Activated CD4-positive, alpha-beta T cell treated with anti-CD3 and anti-CD28 coated beads, Interleukin-2, amount 10 ng/mL, durations not matched to agents 24 days and 14 days (primary cell): ENCODE measurements at regions of chr2 and their contacts with region 1.

Region 1: DNA sequence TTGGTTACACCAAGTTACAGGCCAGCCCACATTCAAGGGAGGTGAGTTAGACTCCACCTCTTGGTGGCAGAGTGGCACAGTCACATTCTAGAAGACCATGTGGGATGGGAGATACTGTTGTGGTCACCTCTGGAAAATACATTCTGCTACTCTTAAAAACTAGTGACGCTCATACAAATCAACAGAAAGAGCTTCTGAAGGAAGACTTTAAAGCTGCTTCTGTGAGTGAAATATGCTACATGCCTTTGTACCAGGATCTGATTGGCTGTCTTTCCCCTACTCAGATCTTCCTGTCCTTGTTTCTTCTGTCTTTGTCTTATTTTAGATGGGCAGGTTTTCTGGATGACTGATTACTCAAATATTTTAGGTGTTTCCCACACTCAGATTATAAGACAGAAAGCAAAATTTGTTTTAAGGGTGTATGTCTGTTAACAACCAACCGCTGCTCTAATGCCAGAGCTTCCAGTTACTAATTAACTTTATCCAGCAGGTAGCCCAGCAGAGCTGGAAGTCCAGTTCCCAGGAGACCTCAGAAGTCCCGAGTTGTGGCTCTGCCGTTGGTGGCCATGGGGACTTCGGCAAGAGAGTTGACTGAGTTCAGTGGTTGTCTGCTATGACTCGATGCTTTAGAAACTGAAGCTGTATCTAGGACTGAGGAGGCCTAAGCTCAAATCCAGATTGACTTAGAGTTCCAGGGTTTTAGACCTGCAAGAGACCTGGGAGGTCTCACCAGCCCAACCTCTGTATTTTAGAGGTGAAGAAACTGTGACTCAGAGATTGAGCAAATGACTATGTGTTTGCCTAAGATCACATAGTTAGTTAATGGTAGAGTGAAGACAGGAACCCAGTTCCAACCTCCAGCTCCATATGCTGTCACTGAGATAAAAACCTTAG is 7.4 kb downstream of the IL1R2 start:
- DNase-seq: no peak
- H3K4me3 Mint-ChIP-seq: no peak overlapping the region
- H3K27ac Mint-ChIP-seq: peak overlapping the region; percentile 79
- H3K4me1 Mint-ChIP-seq: peaks cover 25% of the 10 kb centered on the region
- H3K27me3 Mint-ChIP-seq: peaks cover 3% of the 10 kb centered on the region

Region 2: DNA sequence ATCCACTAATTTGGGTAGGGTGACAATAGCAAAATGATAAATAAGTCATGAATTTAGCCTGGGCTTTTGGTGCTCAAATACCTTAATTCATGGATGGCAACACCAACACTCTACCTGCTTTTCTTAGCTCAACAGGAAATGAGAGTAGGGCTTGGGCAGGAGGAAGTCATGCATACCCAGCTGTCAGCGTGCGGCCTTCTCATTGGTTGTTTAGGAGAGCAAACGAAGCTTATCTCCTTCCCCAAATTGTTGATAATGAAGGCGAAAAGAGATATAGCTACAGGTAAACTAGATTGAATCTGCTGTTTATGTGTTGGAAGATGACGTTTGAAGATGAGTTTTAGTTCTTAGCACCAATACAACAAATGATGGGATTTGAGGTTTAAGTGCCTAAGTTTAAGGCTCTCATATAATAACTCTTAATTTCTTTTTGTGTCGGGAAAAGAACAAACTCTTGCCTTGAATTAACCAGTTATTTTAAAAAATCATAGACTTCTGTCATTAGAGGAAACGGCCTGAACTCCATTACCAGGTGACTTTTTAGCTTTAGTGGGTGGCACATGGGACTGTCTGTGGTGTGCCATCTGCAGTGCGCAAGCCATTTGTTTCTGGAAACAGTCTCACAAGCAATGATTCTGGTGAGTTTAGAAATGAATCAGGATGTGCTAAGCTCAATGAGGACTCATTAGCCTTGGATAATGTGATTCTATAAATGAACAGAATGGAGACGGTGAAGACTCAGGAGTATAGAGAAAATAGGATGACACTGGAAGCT is 281.9 kb before region 1 on chr2:
- intact Hi-C with region 1: loop called (anchors 5 kb)
- DNase-seq: peak; percentile 81
- H3K4me3 Mint-ChIP-seq: peak overlapping the region; percentile 31
- H3K27ac Mint-ChIP-seq: peak overlapping the region; percentile 90
- H3K4me1 Mint-ChIP-seq: peaks cover 58% of the 10 kb centered on the region
- H3K27me3 Mint-ChIP-seq: no peaks in the 10 kb centered on the region

Region 3: GRCh38 chr2:101860157-101860556 is 139.0 kb before region 1 on chr2:
- intact Hi-C with region 1: no loop called
- DNase-seq: no peak
- H3K4me3 Mint-ChIP-seq: no peak overlapping the region
- H3K27ac Mint-ChIP-seq: no peak overlapping the region
- H3K4me1 Mint-ChIP-seq: peaks cover 20% of the 10 kb centered on the region
- H3K27me3 Mint-ChIP-seq: no peaks in the 10 kb centered on the region

Region 4: GRCh38 chr2:101883863-101884262 is 115.3 kb before region 1 on chr2:
- intact Hi-C with region 1: loop called (anchors 5 kb)
- DNase-seq: peak; percentile 72
- H3K4me3 Mint-ChIP-seq: no peak overlapping the region
- H3K27ac Mint-ChIP-seq: no peak overlapping the region
- H3K4me1 Mint-ChIP-seq: peaks cover 7% of the 10 kb centered on the region
- H3K27me3 Mint-ChIP-seq: no peaks in the 10 kb centered on the region

Region 5: DNA sequence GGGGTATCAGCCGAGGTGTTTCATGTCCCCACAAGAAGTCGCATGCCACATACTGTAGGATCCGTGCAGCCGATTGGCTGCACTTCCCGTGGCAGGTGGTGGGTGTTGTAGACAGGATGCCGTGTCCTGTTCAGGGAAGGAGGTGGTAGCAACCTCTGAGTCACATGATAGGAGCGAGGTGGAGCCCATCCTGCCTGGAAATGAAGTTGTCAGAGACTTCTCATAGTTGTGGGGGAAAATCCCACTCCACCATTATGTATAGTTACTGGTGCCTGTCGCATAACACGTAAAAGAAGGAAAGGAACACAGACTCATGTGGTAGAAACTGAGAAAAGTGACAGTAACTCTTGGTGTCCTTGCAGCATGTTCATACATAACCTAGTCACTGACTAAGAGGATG is 98.8 kb before region 1 on chr2:
- intact Hi-C with region 1: loop called (anchors 1 kb)
- DNase-seq: peak; percentile 63
- H3K4me3 Mint-ChIP-seq: no peak overlapping the region
- H3K27ac Mint-ChIP-seq: peak overlapping the region; percentile 60
- H3K4me1 Mint-ChIP-seq: peaks cover 10% of the 10 kb centered on the region
- H3K27me3 Mint-ChIP-seq: no peaks in the 10 kb centered on the region

Region 6: GRCh38 chr2:101952551-101952950 is 46.6 kb before region 1 on chr2:
- intact Hi-C with region 1: loop called (anchors 2 kb)
- DNase-seq: no peak
- H3K4me3 Mint-ChIP-seq: no peak overlapping the region
- H3K27ac Mint-ChIP-seq: no peak overlapping the region
- H3K4me1 Mint-ChIP-seq: peaks cover 2% of the 10 kb centered on the region
- H3K27me3 Mint-ChIP-seq: no peaks in the 10 kb centered on the region

Region 7: DNA sequence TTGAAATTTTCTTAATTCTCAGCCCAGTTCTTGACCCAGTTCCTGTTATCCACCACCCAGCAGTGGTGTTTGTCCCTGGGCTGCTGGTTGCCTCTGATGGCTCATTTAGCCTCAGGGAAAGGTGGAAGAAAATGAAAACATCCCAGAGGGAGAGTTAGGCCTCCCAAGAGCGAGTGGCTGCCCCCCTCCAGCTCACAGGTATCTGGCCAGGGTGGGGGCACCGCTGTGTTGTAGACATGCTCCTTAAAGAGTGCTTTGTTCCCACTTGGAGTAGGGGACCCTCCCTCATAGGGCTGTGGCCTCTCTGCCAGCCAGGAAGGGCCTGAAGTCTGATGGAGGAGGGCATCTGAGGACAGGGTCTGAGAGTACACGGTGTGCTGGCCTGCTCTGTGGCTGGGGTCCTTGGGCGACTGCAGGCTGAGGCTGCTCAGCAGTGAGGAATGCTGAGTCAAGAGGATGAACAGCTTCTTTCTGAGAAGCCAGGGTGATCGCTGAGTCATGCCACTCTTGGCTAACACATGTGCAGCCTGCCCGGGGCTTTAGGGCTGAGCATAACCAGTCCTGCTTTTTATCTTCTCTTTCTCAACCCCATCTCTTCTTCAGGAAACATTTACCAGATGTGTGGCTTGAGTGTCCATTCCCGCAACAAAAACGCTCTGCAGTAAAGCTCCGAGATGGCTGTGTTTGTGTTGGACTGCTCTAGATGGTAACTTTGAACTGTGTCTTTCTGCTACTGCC is 65.0 kb after region 1 on chr2:
- intact Hi-C with region 1: loop called (anchors 2 kb)
- DNase-seq: peak; percentile 67
- H3K4me3 Mint-ChIP-seq: no peak overlapping the region
- H3K27ac Mint-ChIP-seq: no peak overlapping the region
- H3K4me1 Mint-ChIP-seq: peaks cover 19% of the 10 kb centered on the region
- H3K27me3 Mint-ChIP-seq: peaks cover 10% of the 10 kb centered on the region

Region 8: GRCh38 chr2:102355526-102356380 is 356.6 kb after region 1 on chr2 and contains the start of gene IL18R1:
- intact Hi-C with region 1: loop called (anchors 5 kb)
- DNase-seq: peak; percentile 92
- H3K4me3 Mint-ChIP-seq: peak within 1 kb of the TSS; percentile 99
- H3K27ac Mint-ChIP-seq: peak within 1 kb of the TSS; percentile 99
- H3K4me1 Mint-ChIP-seq: peaks cover 39% of the 10 kb centered on the region
- H3K27me3 Mint-ChIP-seq: no peaks in the 10 kb centered on the region
- total RNA-seq, gene IL18R1: 41.7 and 50.2 TPM in 2 replicates